B cell (primary cell): ENCODE measurements at regions of chr17 and their contacts with region 1.

Region 1: GRCh38 chr17:10875979-10876555 is 38.2 kb upstream of the PIRT start:
- DNase-seq: peak; percentile 31
- ATAC-seq: no peak
- H3K4me3 ChIP-seq: no peak overlapping the region
- H3K4me3 Mint-ChIP-seq: no peak overlapping the region
- H3K27ac ChIP-seq: no peak overlapping the region
- H3K27ac Mint-ChIP-seq: no peak overlapping the region
- H3K4me1 ChIP-seq: no peaks in the 10 kb centered on the region
- H3K4me1 Mint-ChIP-seq: no peaks in the 10 kb centered on the region
- H3K27me3 ChIP-seq: peaks cover 0 to 3% (median 1%) of the 10 kb centered on the region in 4 experiments
- H3K27me3 Mint-ChIP-seq: peaks cover 18% of the 10 kb centered on the region
- CTCF ChIP-seq: peak; percentile 61

Region 2: GRCh38 chr17:11644261-11645212 is 768.5 kb after region 1 on chr17:
- CTCF ChIA-PET with region 1: interaction called, 11 read pairs
- POLR2A ChIA-PET with region 1: no interaction called
- intact Hi-C with region 1: loop called (anchors 5 kb)
- DNase-seq: peak; percentile 43
- ATAC-seq: peak; percentile 28
- H3K4me3 ChIP-seq: no peak overlapping the region
- H3K4me3 Mint-ChIP-seq: no peak overlapping the region
- H3K27ac ChIP-seq: no peak overlapping the region
- H3K27ac Mint-ChIP-seq: no peak overlapping the region
- H3K4me1 ChIP-seq: no peaks in the 10 kb centered on the region
- H3K4me1 Mint-ChIP-seq: no peaks in the 10 kb centered on the region
- H3K27me3 ChIP-seq: no peaks in the 10 kb centered on the region
- H3K27me3 Mint-ChIP-seq: no peaks in the 10 kb centered on the region
- CTCF ChIP-seq: peak; percentile 85

Region 3: DNA sequence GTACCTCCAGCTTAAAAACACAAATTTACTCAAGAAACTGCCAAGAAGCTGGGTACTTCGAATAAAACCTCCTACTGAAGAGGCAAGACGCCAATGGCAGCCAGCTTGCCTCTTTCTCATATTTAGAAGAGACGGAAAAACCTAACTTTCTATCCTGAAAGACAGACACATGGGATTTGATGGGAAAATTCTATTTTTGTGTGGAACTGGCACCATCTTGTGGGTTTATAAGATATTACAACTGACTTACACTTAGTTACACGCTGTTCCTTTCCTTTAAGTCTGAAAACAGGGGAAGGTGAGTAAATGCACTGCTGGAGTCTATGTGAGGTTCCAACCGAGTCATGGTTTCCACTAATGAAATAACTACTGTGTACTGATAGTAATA is 1110.9 kb after region 1 on chr17:
- CTCF ChIA-PET with region 1: no interaction called
- POLR2A ChIA-PET with region 1: no interaction called
- intact Hi-C with region 1: loop called (anchors 5 kb)
- DNase-seq: no peak
- ATAC-seq: no peak
- H3K4me3 ChIP-seq: no peak overlapping the region
- H3K4me3 Mint-ChIP-seq: no peak overlapping the region
- H3K27ac ChIP-seq: no peak overlapping the region
- H3K27ac Mint-ChIP-seq: no peak overlapping the region
- H3K4me1 ChIP-seq: no peaks in the 10 kb centered on the region
- H3K4me1 Mint-ChIP-seq: no peaks in the 10 kb centered on the region
- H3K27me3 ChIP-seq: no peaks in the 10 kb centered on the region
- H3K27me3 Mint-ChIP-seq: no peaks in the 10 kb centered on the region
- CTCF ChIP-seq: peak; percentile 56